IMR-90 (cell line): ENCODE measurements at regions of chr2 and their contacts with region 1.

Region 1: DNA sequence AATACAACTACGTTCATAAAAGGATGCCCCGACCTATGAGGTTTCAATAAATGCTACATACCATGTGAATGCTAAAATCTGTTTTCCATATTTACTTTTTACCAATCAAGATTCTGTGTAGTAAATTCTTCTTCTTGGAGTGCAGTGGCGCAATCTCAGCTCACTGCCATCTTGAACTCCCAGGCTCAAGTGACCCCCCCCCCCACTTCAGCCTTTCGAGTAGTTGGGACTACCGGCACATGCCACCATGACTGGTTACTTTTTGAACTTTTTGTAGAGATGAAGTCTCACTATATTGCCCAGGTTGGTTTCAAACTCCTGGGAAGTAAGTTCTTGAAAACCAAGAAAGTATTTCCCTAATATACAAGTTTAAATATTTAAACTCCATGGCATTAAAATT is 14.4 kb upstream of the USP34 start:
- DNase-seq: no peak
- ATAC-seq: no peak
- H3K4me3 ChIP-seq: no peak overlapping the region
- H3K27ac ChIP-seq: no peak overlapping the region; the same call in 1 of the 2 replicates
- H3K4me1 ChIP-seq: peaks cover 7% of the 10 kb centered on the region
- H3K27me3 ChIP-seq: no peaks in the 10 kb centered on the region
- CTCF ChIP-seq: no peak
- POLR2A ChIP-seq: no peak
- RAD21 ChIP-seq: no peak

Region 2: GRCh38 chr2:61100801-61101200 is 384.5 kb before region 1 on chr2:
- CTCF ChIA-PET with region 1: no interaction called
- POLR2A ChIA-PET with region 1: no interaction called
- dilution Hi-C with region 1: no loop called
- in situ Hi-C with region 1: no loop called
- intact Hi-C with region 1: no loop called
- DNase-seq: peak; percentile 0
- ATAC-seq: no peak
- H3K4me3 ChIP-seq: no peak overlapping the region
- H3K27ac ChIP-seq: no peak overlapping the region
- H3K4me1 ChIP-seq: no peaks in the 10 kb centered on the region
- H3K27me3 ChIP-seq: no peaks in the 10 kb centered on the region
- CTCF ChIP-seq: no peak
- POLR2A ChIP-seq: no peak
- RAD21 ChIP-seq: no peak

Region 3: GRCh38 chr2:61888267-61889055 is 403.2 kb after region 1 on chr2 and contains the start of gene CCT4:
- CTCF ChIA-PET with region 1: no interaction called
- POLR2A ChIA-PET with region 1: no interaction called
- dilution Hi-C with region 1: no loop called
- in situ Hi-C with region 1: no loop called
- intact Hi-C with region 1: loop called (anchors 10 kb)
- DNase-seq: peak; percentile 71
- ATAC-seq: peak; percentile 96
- H3K4me3 ChIP-seq: peak within 1 kb of the TSS; percentile 90
- H3K27ac ChIP-seq: peak within 1 kb of the TSS; percentile 91
- H3K4me1 ChIP-seq: peaks cover 3% of the 10 kb centered on the region
- H3K27me3 ChIP-seq: no peaks in the 10 kb centered on the region
- CTCF ChIP-seq: 0 out of 2 replicates have a peak, but pooled peaks have one; percentile 3
- POLR2A ChIP-seq: peak; percentile 97
- RAD21 ChIP-seq: no peak
- total RNA-seq, gene CCT4: 187 and 233 TPM in 2 replicates